CD14-positive monocyte (primary cell): ENCODE measurements at regions of chr5 and their contacts with region 1.

Region 1: DNA sequence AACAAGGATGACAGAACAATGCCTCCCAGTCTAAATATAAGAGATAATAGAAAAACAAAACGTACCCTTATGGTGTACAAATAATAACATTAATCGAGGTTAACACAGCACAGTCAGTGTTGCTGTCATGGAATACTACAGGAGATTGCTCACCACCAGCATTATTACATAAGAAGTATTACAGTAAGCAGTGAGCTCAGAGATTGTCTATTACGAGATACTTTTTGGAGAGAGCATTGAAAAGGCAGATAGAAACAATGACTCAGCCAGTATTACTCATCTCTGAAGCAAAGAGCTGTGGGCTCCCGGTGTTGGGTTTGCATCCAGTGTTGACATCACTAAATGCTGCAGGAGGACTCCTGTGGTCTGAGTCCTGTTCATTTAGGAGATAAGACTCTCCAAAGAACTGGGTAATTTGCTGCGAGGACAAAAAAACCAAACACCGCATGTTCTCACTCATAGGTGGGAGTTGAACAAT is 191.9 kb upstream of the SEMA6A start:
- DNase-seq: no peak
- H3K4me3 ChIP-seq: no peak overlapping the region
- H3K4me3 Mint-ChIP-seq: no peak overlapping the region
- H3K27ac ChIP-seq: no peak overlapping the region
- H3K27ac Mint-ChIP-seq: no peak overlapping the region
- H3K4me1 ChIP-seq: no peaks in the 10 kb centered on the region
- H3K4me1 Mint-ChIP-seq: no peaks in the 10 kb centered on the region
- H3K27me3 ChIP-seq: no peaks in the 10 kb centered on the region
- H3K27me3 Mint-ChIP-seq: peaks cover 1 to 4% (median 2%) of the 10 kb centered on the region in 3 donors
- CTCF ChIP-seq: no peak

Region 2: DNA sequence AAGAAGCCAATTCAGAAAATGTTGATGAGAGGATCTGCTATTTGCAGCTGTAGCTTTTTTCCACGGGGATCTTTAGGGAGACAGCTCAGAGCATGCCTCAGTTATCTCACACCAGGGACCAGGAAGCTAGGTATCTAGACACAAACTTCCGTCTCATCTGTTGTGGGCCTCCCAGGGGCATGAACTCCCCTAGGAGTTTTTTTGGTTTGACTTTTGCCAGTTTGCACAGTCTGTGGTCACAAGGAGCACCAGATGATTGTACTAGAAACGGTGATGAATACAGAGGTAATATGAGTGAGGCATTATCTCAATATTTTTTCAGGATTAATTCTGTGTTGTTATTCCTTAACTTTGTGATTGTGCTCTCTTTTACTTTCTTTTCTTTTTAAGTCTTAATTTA is 341.4 kb after region 1 on chr5:
- intact Hi-C with region 1: loop called in 1 of 2 experiments (anchors 5 kb)
- DNase-seq: no peak
- H3K4me3 ChIP-seq: no peak overlapping the region
- H3K4me3 Mint-ChIP-seq: no peak overlapping the region
- H3K27ac ChIP-seq: no peak overlapping the region
- H3K27ac Mint-ChIP-seq: no peak overlapping the region
- H3K4me1 ChIP-seq: no peaks in the 10 kb centered on the region
- H3K4me1 Mint-ChIP-seq: no peaks in the 10 kb centered on the region
- H3K27me3 ChIP-seq: no peaks in the 10 kb centered on the region
- H3K27me3 Mint-ChIP-seq: no peaks in the 10 kb centered on the region
- CTCF ChIP-seq: no peak